A673 (cell line): ENCODE measurements at regions of chrX and their contacts with region 1.

Region 1: DNA sequence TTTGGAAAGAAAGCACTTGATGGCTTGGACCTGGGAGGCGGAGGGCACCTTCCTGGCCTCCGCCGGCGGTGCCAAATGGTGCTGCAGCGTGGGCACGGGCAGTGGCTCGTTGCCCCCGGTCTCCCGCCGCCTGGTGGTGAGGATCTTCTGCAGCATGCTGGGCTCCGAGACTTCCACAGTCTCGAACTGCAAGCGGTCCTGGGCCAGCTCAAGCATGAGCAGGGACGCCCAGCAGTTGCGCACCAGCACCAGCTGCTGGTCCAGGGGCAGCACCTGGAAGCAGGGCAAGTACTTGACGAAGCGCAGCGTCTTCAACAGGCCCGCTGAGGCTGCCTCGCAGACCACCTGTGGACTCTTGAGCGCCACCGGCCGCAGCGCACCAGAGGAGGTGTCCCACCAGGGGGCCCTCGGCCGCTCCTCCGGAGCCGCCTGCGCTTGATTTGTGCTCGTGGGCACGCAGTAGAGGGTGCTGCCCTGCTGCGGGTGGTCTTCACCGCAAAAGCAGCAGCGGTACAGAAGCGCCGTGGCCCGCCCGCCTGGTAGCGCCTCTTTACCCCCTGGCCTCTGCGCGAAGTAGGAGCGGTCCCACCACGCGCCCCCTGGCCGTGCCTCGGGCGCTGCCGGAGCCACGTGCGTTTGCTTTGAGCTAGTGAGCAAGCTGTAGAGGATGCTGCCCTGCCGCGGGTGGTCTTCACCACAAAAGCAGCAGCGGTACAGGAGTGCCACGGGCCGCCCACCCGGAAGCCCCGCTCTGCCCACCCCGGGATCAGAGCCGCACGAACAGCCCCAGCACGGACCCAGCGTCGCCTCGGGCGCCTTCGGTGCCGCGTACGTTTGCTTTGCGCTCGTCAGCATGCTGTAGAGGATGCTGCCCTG is 689 bp downstream of the NR0B1 start:
- DNase-seq: peak; percentile 79
- H3K4me3 ChIP-seq: peak overlapping the region; percentile 70
- H3K27ac ChIP-seq: peak overlapping the region; percentile 82
- H3K4me1 ChIP-seq: peaks cover 18% of the 10 kb centered on the region
- H3K27me3 ChIP-seq: no peaks in the 10 kb centered on the region
- CTCF ChIP-seq: peak; percentile 72

Region 2: GRCh38 chrX:30468471-30468870 is 160.0 kb after region 1 on chrX:
- CTCF ChIA-PET with region 1: no interaction called
- POLR2A ChIA-PET with region 1: no interaction called
- intact Hi-C with region 1: loop called (anchors 5 kb)
- DNase-seq: peak; percentile 85
- H3K4me3 ChIP-seq: no peak overlapping the region
- H3K27ac ChIP-seq: peak overlapping the region; percentile 53
- H3K4me1 ChIP-seq: peaks cover 19% of the 10 kb centered on the region
- H3K27me3 ChIP-seq: no peaks in the 10 kb centered on the region
- CTCF ChIP-seq: no peak